Gastrocnemius medialis (tissue), 4 donors: ENCODE measurements at regions of chrX and their contacts with region 1.

Region 1: GRCh38 chrX:39814391-39814790 is 283.4 kb downstream of the BCOR start:
- DNase-seq: no peak
- ATAC-seq: peak; percentile 25 to 40
- H3K4me3 ChIP-seq: no peak overlapping the region
- H3K27ac ChIP-seq: peak overlapping the region; percentile 52 to 74 (median 71)
- H3K4me1 ChIP-seq: peaks cover 5 to 6% of the 10 kb centered on the region in 2 donors
- H3K27me3 ChIP-seq: peaks cover 0 to 3% (median 0%) of the 10 kb centered on the region in 3 donors
- CTCF ChIP-seq: peak; percentile 23 to 55 (median 40)
- POLR2A ChIP-seq: no peak

Region 2: DNA sequence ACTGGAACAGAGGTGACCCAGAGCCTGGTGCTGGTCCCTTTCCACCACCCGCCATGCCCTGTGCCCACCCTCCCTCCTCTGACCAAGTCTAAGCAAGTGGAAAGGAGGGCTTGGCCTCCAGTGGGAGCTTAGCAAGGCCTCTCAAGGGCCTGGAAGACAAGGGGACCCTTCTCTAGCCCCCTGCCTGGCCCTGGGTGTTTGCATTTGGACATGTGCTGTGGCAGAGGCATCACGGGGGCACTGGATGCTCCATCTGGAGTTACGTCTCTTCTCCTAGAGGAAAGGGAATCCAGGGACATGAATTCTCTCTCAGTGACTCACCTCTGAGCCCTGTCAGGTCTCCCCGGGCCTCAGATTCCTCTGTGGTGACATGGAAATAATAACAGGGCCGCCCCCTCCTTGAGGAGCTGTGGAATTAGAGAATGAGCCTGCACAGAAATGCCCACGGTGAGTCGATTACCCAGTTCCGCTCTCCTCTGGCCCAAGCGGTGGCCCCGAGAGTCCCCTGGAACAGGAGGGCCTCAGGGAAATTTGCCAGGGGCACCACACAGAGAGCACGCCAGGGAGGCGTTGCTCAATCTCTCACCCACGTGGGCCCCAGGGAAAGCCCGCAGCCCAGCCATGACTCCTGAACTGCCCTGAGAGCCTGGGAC is 93.7 kb after region 1 on chrX:
- in situ Hi-C with region 1: no loop called
- intact Hi-C with region 1: loop called (anchors 5 kb)
- DNase-seq: peak; percentile 49 to 72
- ATAC-seq: peak; percentile 93 to 97
- H3K4me3 ChIP-seq: peak overlapping the region in 1 of 4 donors; percentile 28
- H3K27ac ChIP-seq: peak overlapping the region; percentile 54 to 76 (median 70)
- H3K4me1 ChIP-seq: peaks cover 0 to 18% of the 10 kb centered on the region in 2 donors
- H3K27me3 ChIP-seq: no peaks in the 10 kb centered on the region
- CTCF ChIP-seq: no peak
- POLR2A ChIP-seq: no peak

Region 3: GRCh38 chrX:40132751-40133150 is 318.4 kb after region 1 on chrX:
- in situ Hi-C with region 1: no loop called
- intact Hi-C with region 1: no loop called
- DNase-seq: peak; percentile 67 to 85
- ATAC-seq: peak; percentile 90 to 96
- H3K4me3 ChIP-seq: no peak overlapping the region
- H3K27ac ChIP-seq: peak overlapping the region; percentile 59 to 72 (median 69)
- H3K4me1 ChIP-seq: peaks cover 10 to 11% of the 10 kb centered on the region in 2 donors
- H3K27me3 ChIP-seq: no peaks in the 10 kb centered on the region
- CTCF ChIP-seq: no peak
- POLR2A ChIP-seq: peak in 1 of 2 donors; percentile 20

Region 4: DNA sequence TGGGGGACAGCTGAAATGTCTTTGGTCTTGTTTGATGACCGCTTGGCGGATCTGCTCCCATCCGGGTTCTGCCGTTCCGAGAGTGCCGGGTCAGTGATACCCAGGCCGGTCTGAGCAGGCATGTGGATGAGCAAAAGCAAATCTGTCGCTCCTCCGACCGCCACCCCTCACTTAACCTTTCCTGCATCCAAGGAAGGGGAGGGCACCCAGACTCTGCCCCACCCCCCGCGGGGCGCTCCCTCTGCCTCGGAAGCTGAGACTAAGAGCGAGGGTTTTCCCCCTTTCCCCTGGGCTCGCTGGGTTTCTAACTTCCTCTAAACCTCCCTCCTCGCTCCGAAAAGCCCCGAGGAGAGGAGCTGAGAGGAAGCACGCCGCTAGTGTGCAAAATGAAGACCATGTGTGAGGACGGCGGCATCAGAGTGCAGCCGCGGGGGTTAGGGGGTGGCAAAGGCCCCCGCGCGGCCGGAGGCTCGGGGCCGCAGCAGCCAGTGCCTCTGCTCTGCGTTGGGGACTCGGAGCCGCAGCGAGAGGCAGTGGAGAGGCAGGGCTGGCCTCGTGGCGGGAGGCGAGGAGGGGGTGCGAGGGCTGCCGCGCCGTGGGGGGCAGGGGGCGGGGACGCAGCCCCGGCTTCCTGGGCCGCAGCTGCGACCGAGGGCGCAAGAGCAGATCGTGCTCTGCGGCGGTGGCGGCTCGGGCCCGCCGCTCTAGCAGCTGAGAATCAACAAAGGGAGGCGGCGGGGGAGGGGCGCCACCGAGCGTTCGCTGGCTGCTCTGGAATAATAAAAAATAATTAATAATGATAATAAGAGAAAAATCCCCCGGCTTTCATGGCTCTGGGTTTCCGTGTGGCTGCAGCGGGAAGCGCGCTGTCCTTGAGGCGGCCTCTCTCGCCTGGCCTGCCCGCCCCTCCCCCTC is 339.2 kb after region 1 on chrX:
- in situ Hi-C with region 1: no loop called
- intact Hi-C with region 1: loop called (anchors 1 kb)
- DNase-seq: peak in 1 of 2 donors; percentile 30
- ATAC-seq: peak; percentile 6 to 20
- H3K4me3 ChIP-seq: peak overlapping the region; percentile 50 to 63 (median 60)
- H3K27ac ChIP-seq: peak overlapping the region; percentile 77 to 86 (median 82)
- H3K4me1 ChIP-seq: peaks cover 4 to 18% of the 10 kb centered on the region in 2 donors
- H3K27me3 ChIP-seq: peaks cover 0 to 22% (median 5%) of the 10 kb centered on the region in 3 donors
- CTCF ChIP-seq: peak in 1 of 5 experiments; percentile 20
- POLR2A ChIP-seq: no peak

Region 5: DNA sequence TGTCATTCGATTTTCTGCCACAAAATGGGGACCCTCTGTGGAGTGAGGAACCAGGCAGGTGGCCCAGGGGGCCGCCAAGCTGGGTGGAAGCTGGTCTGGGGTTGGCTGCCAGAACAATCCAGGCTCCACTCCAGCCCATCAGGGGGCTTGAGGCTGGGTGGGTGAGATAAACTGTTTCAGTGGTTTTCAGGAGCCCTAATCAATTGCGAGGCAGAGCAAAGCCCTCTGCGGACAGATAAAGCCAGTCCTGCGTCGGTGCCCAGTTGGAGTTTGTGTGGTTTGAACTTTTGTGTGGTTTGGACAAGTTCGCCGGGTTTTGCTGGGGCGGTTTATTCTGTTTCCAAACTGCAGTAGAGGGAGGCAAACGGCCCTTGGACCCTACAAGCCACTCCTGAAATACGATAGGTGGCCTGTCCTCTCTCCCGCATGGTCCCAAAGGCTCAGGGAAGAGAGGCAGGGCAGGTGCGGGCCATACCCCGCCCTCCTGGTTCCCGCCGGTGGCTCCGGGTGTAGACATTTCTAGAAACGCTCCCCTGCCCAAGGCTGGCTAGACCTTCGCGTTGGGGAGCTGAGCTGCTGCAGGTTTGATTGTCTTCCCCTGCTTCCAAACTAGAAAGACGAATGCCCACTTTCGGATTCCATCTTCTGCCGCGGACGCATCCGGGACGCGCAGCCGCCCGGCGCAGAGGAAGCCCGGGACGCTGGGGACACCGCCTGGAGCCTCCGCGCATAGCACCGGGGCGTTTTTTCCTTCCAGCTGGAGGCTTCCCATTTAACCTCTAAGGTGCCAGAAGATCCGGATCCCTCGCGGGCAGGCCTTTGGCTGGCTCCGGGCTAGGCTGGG is 452.3 kb after region 1 on chrX:
- in situ Hi-C with region 1: no loop called
- intact Hi-C with region 1: loop called (anchors 2 kb)
- DNase-seq: peak; percentile 11 to 35
- ATAC-seq: peak; percentile 78 to 82
- H3K4me3 ChIP-seq: peak overlapping the region; percentile 49 to 59 (median 52)
- H3K27ac ChIP-seq: peak overlapping the region; percentile 6 to 60 (median 54)
- H3K4me1 ChIP-seq: no peaks in the 10 kb centered on the region
- H3K27me3 ChIP-seq: no peaks in the 10 kb centered on the region
- CTCF ChIP-seq: peak; percentile 36 to 68 (median 65)
- POLR2A ChIP-seq: no peak

Region 6: DNA sequence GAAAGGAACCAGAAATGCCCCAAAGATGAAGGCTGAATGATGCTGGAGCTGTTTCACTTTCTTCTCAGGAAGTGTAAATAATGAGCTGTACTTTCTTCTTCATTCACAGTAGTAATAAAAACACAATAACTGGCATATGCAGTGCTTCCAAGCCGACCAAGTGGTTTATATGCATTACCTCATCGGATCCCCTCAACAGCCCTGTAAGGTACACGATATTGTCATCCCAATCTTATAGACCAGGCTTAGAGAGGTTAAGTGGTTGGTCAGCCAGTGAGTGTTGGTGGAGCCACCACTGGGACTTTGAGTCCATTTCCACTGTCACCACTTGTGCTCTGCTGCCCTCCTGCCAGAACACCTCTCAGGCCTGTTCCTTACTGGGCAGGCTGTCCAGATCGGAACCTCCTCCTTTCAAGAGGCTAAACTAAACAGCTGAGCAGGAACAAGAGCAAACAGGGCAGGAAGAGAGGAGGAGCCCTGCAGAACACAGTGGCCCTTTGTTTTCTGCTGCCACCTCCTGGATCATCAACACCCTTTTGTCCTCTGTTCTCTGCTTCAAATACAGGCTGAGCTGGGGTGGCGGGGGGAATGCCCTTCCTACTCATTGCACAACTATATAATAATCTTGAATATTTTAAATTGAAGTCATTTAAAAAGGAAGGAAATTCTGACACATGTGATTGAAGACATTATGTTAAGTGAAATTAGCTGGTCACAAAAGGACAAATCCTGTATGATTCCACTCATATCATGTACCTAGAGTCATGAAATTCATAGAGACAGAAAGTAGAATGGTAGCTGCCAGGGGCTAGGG is 653.8 kb after region 1 on chrX:
- in situ Hi-C with region 1: no loop called
- intact Hi-C with region 1: loop called (anchors 10 kb)
- DNase-seq: peak in 1 of 2 donors; percentile 22
- ATAC-seq: peak; percentile 74 to 79
- H3K4me3 ChIP-seq: no peak overlapping the region
- H3K27ac ChIP-seq: no peak overlapping the region
- H3K4me1 ChIP-seq: no peaks in the 10 kb centered on the region
- H3K27me3 ChIP-seq: no peaks in the 10 kb centered on the region
- CTCF ChIP-seq: peak in 1 of 5 experiments; percentile 27
- POLR2A ChIP-seq: no peak